Activated B cell treated with CpG ODN at 0.5 μM for 24 hours (primary cell): ENCODE measurements at regions of chr4 and their contacts with region 1.

Region 1: GRCh38 chr4:85557016-85557901 is 82.3 kb downstream of the ARHGAP24 start:
- DNase-seq: peak; percentile 83
- ATAC-seq: peak; percentile 84
- H3K4me3 Mint-ChIP-seq: peak overlapping the region; percentile 61
- H3K27ac Mint-ChIP-seq: peak overlapping the region; percentile 96
- H3K4me1 Mint-ChIP-seq: peaks cover 80% of the 10 kb centered on the region
- H3K27me3 Mint-ChIP-seq: no peaks in the 10 kb centered on the region
- CTCF ChIP-seq: no peak

Region 2: DNA sequence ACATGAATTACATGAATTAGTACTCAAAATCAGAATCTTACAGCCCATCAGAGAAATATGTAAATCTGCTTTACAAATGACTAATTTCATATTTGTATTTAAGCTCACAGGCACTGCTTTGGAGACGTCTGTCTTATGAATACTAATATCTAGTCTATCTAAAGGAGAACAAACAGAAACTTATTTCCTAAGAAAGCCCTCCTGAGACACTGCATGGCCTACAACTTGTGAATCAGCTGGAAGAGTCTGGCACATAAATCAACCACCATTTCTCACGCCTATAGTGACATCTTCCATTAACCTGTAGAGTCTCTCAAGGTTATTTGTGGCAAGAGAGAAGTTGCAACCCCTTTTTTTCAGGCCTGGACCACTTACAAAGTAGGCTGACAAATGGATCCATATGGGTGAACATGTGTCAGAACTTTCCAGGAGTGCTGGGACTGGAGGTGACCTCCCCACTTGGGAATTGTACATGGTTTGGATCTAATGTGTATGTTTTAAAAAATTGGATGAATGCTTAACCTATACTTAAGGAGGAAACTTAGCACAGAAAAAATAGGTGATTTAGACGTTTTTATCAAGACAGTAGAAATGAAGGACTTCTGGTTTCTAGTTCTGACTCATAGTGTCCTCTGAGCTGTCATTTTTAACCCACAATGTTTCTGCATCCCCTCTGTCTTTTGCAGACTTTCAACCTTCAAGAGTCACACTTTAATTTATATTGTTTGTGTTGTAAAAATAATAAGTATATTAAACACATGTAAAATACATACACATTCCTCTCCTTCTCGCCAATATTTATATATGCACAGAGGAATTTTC is 165.5 kb before region 1 on chr4:
- CTCF ChIA-PET with region 1: no interaction called
- POLR2A ChIA-PET with region 1: interaction called, 3 read pairs
- intact Hi-C with region 1: loop called (anchors 2 kb)
- DNase-seq: no peak
- ATAC-seq: peak; percentile 63
- H3K4me3 Mint-ChIP-seq: peak overlapping the region; percentile 61
- H3K27ac Mint-ChIP-seq: peak overlapping the region; percentile 84
- H3K4me1 Mint-ChIP-seq: peaks cover 35% of the 10 kb centered on the region
- H3K27me3 Mint-ChIP-seq: no peaks in the 10 kb centered on the region
- CTCF ChIP-seq: no peak

Region 3: GRCh38 chr4:85522277-85522676 is 35.0 kb before region 1 on chr4:
- CTCF ChIA-PET with region 1: no interaction called
- POLR2A ChIA-PET with region 1: no interaction called
- intact Hi-C with region 1: loop called (anchors 5 kb)
- DNase-seq: no peak
- ATAC-seq: no peak
- H3K4me3 Mint-ChIP-seq: no peak overlapping the region
- H3K27ac Mint-ChIP-seq: no peak overlapping the region
- H3K4me1 Mint-ChIP-seq: peaks cover 57% of the 10 kb centered on the region
- H3K27me3 Mint-ChIP-seq: no peaks in the 10 kb centered on the region
- CTCF ChIP-seq: no peak

Region 4: DNA sequence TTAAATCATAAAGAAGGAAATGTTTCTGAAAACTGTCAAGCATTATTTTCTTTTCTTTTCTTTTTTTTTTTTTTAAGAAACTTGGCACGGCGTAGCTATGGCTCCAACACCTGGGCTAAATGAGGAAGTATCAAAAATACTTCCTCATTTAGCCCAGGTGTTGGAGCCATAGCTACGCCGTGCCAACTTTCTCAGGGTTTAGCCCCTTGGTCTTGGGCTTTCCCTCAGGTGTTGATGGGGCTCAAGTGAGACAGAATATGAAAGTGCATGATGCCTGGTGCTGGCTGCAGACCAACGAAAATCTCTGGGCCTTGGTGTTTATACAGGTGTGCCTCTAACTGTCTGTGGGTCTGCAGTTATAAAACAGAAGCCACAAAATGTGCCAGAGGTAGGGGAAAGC is 50.4 kb after region 1 on chr4:
- CTCF ChIA-PET with region 1: no interaction called
- POLR2A ChIA-PET with region 1: interaction called, 5 read pairs
- intact Hi-C with region 1: loop called (anchors 1 kb)
- DNase-seq: no peak
- ATAC-seq: peak; percentile 90
- H3K4me3 Mint-ChIP-seq: peak overlapping the region; percentile 70
- H3K27ac Mint-ChIP-seq: peak overlapping the region; percentile 92
- H3K4me1 Mint-ChIP-seq: peaks cover 50% of the 10 kb centered on the region
- H3K27me3 Mint-ChIP-seq: no peaks in the 10 kb centered on the region
- CTCF ChIP-seq: no peak

Region 5: GRCh38 chr4:85701861-85702321 is 144.6 kb after region 1 on chr4:
- CTCF ChIA-PET with region 1: no interaction called
- POLR2A ChIA-PET with region 1: interaction called, 16 read pairs
- intact Hi-C with region 1: loop called (anchors 1 kb)
- DNase-seq: no peak
- ATAC-seq: peak; percentile 80
- H3K4me3 Mint-ChIP-seq: peak overlapping the region; percentile 70
- H3K27ac Mint-ChIP-seq: peak overlapping the region; percentile 93
- H3K4me1 Mint-ChIP-seq: peaks cover 73% of the 10 kb centered on the region
- H3K27me3 Mint-ChIP-seq: no peaks in the 10 kb centered on the region
- CTCF ChIP-seq: no peak

Region 6: GRCh38 chr4:85778632-85779131 is 221.4 kb after region 1 on chr4:
- CTCF ChIA-PET with region 1: no interaction called
- POLR2A ChIA-PET with region 1: interaction called, 4 read pairs
- intact Hi-C with region 1: loop called (anchors 1 kb)
- DNase-seq: no peak
- ATAC-seq: peak; percentile 61
- H3K4me3 Mint-ChIP-seq: peak overlapping the region; percentile 91
- H3K27ac Mint-ChIP-seq: peak overlapping the region; percentile 93
- H3K4me1 Mint-ChIP-seq: peaks cover 69% of the 10 kb centered on the region
- H3K27me3 Mint-ChIP-seq: no peaks in the 10 kb centered on the region
- CTCF ChIP-seq: no peak